ENCODE measurements at regions of chr6 and their contacts with region 1.

Region 1: GRCh38 chr6:8063761-8064637 is at the start of gene BLOC1S5:
- DNase-seq: peak; percentile 95
- H3K4me3 Mint-ChIP-seq: peak within 1 kb of the TSS; percentile 95
- H3K27ac Mint-ChIP-seq: peak within 1 kb of the TSS; percentile 98
- H3K4me1 Mint-ChIP-seq: peaks cover 34% of the 10 kb centered on the region
- H3K27me3 Mint-ChIP-seq: no peaks in the 10 kb centered on the region
- total RNA-seq, gene BLOC1S5: 21.2 and 25.4 TPM in 2 replicates

Region 2: GRCh38 chr6:7389451-7390225 is 674.4 kb before region 1 on chr6 and contains the starts of genes CAGE1 and RIOK1:
- intact Hi-C with region 1: loop called (anchors 5 kb)
- DNase-seq: peak; percentile 93
- H3K4me3 Mint-ChIP-seq: peak within 1 kb of the TSS; percentile 92
- H3K27ac Mint-ChIP-seq: peak within 1 kb of the TSS; percentile 99
- H3K4me1 Mint-ChIP-seq: peaks cover 27% of the 10 kb centered on the region
- H3K27me3 Mint-ChIP-seq: no peaks in the 10 kb centered on the region
- total RNA-seq, gene CAGE1: 0.16 TPM in 2 replicates
- total RNA-seq, gene RIOK1: 44.4 and 53.3 TPM in 2 replicates

Region 3: GRCh38 chr6:7615611-7616383 is 448.2 kb before region 1 on chr6:
- intact Hi-C with region 1: loop called (anchors 5 kb)
- DNase-seq: no peak
- H3K4me3 Mint-ChIP-seq: no peak overlapping the region
- H3K27ac Mint-ChIP-seq: no peak overlapping the region
- H3K4me1 Mint-ChIP-seq: peaks cover 17% of the 10 kb centered on the region
- H3K27me3 Mint-ChIP-seq: no peaks in the 10 kb centered on the region

Region 4: DNA sequence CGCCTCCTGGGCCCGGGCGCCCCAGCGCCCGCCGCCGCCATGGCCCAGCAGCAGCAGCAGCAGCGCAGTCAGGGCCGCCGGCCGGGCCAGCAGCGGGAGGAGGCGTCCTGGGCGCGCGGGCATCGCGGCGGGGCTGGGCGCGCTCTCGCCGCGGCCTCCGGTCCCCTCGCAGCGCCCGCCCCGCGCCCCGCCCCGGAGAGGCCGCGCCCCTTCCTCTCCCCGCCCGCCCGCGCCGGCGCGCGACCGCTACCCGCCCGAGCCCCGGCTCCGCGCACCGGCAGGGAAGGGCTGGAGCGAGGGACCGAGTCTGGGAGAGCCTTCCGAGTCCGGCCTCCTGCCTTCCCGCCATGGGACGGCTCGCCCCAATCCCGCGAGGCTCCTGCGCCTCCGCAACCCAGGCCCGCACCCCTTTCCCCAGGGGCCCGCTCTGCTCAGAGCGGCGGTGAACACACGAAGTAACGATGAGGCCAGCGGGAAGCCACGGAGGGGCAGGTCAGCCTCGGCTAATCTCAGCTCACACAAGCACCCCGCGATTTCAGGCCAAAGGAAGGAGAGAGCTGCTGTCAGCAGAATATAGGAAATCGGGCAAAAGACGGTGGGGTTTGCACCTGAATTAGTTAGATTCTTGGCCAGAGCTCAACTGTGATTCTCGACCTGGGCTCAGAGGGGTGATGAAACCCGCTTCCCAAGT is 153.2 kb before region 1 on chr6 and contains the start of gene TXNDC5:
- intact Hi-C with region 1: loop called (anchors 2 kb)
- DNase-seq: peak; percentile 61
- H3K4me3 Mint-ChIP-seq: peak within 1 kb of the TSS; percentile 90
- H3K27ac Mint-ChIP-seq: peak within 1 kb of the TSS; percentile 75
- H3K4me1 Mint-ChIP-seq: peaks cover 12% of the 10 kb centered on the region
- H3K27me3 Mint-ChIP-seq: peaks cover 1% of the 10 kb centered on the region
- total RNA-seq, gene TXNDC5: 113 and 117 TPM in 2 replicates

Region 5: GRCh38 chr6:8082954-8083858 is 19.2 kb after region 1 on chr6:
- intact Hi-C with region 1: loop called (anchors 1 kb)
- DNase-seq: no peak
- H3K4me3 Mint-ChIP-seq: no peak overlapping the region
- H3K27ac Mint-ChIP-seq: peak overlapping the region; percentile 78
- H3K4me1 Mint-ChIP-seq: peaks cover 31% of the 10 kb centered on the region
- H3K27me3 Mint-ChIP-seq: no peaks in the 10 kb centered on the region

Region 6: DNA sequence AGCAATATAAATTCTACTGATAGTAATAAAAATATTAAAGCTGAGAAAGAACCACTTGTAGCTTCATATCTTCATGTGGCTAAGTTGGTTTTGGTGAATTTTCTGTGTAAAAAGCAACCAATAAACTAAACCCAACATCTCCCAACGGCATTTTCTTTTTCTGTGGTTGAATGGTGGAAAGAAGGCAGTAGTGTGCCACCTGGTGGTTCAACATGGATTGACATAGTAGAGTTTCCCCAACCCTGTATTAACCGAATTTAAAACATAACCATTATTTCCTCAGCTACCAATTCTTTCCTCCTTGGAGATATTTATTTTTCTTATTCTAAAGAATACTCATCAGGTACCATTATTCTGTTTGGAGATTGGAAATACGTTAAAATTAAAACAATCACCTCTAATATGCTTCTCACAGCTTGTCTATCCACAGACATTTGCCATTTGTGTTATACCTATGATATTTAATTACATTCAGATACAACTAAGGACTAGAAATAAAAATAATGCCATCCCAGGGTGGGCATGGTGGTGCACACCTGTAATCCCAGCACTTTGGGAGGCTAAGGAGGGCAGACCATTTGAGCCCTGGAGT is 155.4 kb after region 1 on chr6:
- intact Hi-C with region 1: loop called (anchors 10 kb)
- DNase-seq: no peak
- H3K4me3 Mint-ChIP-seq: no peak overlapping the region
- H3K27ac Mint-ChIP-seq: no peak overlapping the region
- H3K4me1 Mint-ChIP-seq: no peaks in the 10 kb centered on the region
- H3K27me3 Mint-ChIP-seq: peaks cover 3% of the 10 kb centered on the region